ENCODE measurements at regions of chr9 and their contacts with region 1.

Region 1: DNA sequence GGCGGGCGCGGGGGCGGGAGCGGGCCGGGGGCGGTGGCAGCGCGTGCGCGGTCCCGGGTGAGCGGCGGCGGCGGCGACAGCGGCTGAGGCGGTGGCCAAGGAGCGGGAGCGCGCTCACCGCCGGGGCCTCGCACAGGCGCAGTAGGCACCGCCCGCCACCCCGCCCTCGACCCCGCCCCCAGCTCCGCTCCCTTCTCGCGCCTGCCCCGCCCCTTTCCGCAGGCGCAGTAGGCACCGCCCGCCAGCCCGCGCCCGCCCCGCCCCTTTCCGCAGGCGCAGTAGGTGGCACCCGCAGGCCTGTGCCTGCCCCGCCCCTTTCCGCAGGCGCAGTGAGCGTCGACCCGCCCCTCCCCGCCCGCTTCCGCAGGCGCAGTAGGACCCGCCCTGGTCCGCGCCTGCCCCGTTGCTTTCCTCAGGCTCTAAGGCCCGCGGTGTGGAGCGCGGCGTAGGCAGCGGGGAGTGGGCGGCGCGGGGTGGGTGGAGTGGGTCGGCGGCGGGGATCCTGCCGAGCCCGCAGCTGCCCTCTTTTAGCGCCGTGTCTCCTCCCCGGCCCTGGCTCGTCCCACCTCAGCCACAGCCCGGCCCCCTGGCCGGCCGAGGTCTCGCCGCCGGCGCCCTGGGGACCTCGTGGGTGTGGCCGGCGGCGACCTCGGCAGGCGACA is at the start of gene CAMSAP1:
- DNase-seq: peak; percentile 98
- ATAC-seq: peak; percentile 81
- H3K4me3 Mint-ChIP-seq: peak within 1 kb of the TSS; percentile 81
- H3K27ac Mint-ChIP-seq: peak within 1 kb of the TSS; percentile 90
- H3K4me1 Mint-ChIP-seq: peaks cover 62% of the 10 kb centered on the region
- H3K27me3 Mint-ChIP-seq: no peaks in the 10 kb centered on the region
- total RNA-seq, gene CAMSAP1: 31.2 to 33.4 TPM

Region 2: DNA sequence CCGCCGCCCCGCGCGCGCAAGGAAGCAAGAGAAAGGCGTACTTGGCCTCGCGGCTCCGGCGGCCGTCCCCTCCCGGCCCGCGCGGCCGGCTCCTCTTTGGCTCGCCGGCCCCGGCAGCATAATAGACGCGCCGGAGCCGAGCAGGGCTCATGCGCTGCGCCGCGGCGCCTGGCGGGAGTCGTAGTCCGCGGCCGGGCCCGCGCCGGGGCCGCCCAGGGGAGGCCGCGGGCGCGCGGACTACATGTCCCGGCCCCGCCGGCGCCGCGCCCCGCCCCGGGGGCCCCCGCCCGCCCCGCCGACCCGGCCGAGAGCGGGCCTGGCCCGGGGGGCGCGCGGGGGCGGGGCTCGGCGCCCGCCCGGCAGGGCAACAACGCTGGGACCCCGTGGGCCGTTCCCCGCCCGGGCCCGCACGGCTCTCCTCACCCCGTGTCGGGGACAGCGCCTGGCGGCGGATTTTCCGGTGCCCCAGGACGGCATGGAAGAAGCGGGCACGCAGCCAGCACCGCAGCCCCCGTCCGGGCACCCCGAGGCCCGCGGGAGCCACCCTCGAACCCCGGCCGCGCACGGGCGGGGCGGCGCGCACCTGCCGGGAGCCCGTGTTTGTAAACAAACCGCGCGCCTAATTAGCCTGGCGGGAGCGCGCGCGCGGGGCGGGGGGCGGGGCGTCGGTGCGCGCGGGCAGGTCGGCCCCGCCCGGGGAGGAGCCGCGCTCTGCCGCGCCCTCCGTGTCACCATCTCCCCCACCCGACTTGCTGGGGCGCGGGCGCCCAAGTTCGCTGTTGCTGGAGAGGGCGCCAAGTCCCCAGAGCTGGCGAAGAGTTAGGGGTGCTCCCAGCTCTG is 1839.4 kb before region 1 on chr9 and contains the start of gene BRD3:
- CTCF ChIA-PET with region 1: no interaction called
- POLR2A ChIA-PET with region 1: no interaction called
- intact Hi-C with region 1: loop called in 1 of 2 experiments (anchors 5 kb)
- DNase-seq: peak; percentile 91
- ATAC-seq: peak; percentile 85
- H3K4me3 Mint-ChIP-seq: peak within 1 kb of the TSS; percentile 85
- H3K27ac Mint-ChIP-seq: peak within 1 kb of the TSS; percentile 84
- H3K4me1 Mint-ChIP-seq: peaks cover 28% of the 10 kb centered on the region
- H3K27me3 Mint-ChIP-seq: peaks cover 14% of the 10 kb centered on the region
- total RNA-seq, gene BRD3: 33.8 to 39.2 TPM

Region 3: DNA sequence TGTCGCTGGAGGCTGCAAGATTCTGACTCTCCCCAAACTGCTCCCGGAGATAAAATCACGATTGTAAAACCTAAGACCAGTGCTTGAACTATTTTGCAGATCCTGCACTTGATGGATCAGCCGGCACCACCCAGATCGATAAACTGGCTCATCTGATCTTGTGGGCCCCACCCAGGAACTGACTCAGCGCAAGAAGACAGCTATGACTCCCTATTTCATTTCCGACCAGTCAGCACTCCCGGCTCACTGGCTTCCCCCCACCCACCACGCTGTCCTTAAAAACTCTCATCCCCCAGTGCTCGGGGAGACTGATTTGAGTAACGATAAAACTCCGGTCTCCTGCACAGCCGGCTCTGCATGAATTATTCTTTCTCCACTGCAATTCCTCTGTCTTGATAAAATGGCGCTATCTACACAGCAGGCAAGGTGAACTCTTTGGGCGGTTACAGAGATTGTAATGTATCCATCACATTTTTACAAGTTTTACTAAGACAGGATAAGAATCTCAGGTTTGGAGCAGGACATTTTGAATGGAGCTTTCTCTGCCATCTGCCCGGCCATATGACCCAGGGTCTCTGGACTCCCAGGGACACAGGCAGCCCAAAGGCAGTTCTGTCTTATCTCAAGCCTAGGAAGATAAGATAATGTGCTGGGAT is 438.6 kb before region 1 on chr9:
- CTCF ChIA-PET with region 1: no interaction called
- POLR2A ChIA-PET with region 1: no interaction called
- intact Hi-C with region 1: no loop called
- DNase-seq: peak; percentile 79
- ATAC-seq: peak; percentile 98
- H3K4me3 Mint-ChIP-seq: peak overlapping the region; percentile 42
- H3K27ac Mint-ChIP-seq: no peak overlapping the region
- H3K4me1 Mint-ChIP-seq: peaks cover 19% of the 10 kb centered on the region
- H3K27me3 Mint-ChIP-seq: peaks cover 39% of the 10 kb centered on the region

Region 4: DNA sequence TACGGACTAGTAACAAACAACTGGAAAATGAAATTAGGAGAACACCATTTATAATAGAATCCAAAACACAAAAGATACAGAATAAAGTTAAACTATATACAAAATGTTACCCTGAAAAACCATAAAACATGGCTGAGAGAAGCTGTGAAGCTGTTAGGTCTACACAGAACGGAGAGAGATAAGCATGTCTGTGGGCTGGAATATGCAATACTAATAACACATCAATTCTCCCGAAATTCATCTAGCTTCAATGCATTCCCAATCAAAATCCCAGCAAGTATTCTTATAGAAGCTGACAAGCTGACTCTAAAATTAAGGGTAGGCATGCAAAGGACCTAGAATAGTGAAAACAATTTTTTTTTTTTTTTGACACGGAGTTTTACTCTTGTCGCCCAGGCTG is 32.7 kb before region 1 on chr9:
- CTCF ChIA-PET with region 1: no interaction called
- POLR2A ChIA-PET with region 1: no interaction called
- intact Hi-C with region 1: no loop called
- DNase-seq: no peak
- ATAC-seq: no peak
- H3K4me3 Mint-ChIP-seq: no peak overlapping the region
- H3K27ac Mint-ChIP-seq: no peak overlapping the region
- H3K4me1 Mint-ChIP-seq: peaks cover 36% of the 10 kb centered on the region
- H3K27me3 Mint-ChIP-seq: no peaks in the 10 kb centered on the region

Region 5: DNA sequence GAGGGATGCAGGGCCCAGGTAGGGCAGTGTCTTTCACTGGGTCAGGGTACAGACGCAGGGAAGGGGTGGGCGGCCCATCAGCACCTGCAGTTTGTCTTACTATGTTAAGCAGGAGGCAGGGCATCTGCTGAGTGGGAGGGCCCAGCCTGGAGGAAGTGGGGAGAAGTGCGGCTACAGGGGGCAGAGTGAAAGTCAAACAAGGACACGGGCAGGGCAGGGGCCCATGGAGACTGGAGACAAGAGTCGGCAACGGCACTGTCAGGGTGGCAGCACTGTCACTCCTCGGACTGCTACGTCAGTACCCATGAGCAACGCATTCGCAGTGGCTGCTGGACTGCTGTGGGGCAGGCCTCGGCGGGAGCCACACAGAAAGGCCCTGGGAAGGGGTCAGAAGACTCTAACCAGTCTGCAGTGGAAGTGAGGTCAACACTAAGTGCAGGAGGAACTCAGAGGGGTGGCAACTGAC is 19.9 kb before region 1 on chr9:
- CTCF ChIA-PET with region 1: interaction called, 3 read pairs
- POLR2A ChIA-PET with region 1: no interaction called
- intact Hi-C with region 1: loop called (anchors 1 to 2 kb)
- DNase-seq: peak; percentile 83
- ATAC-seq: peak; percentile 90
- H3K4me3 Mint-ChIP-seq: peak overlapping the region; percentile 56
- H3K27ac Mint-ChIP-seq: peak overlapping the region; percentile 90
- H3K4me1 Mint-ChIP-seq: peaks cover 69% of the 10 kb centered on the region
- H3K27me3 Mint-ChIP-seq: no peaks in the 10 kb centered on the region

Region 6: DNA sequence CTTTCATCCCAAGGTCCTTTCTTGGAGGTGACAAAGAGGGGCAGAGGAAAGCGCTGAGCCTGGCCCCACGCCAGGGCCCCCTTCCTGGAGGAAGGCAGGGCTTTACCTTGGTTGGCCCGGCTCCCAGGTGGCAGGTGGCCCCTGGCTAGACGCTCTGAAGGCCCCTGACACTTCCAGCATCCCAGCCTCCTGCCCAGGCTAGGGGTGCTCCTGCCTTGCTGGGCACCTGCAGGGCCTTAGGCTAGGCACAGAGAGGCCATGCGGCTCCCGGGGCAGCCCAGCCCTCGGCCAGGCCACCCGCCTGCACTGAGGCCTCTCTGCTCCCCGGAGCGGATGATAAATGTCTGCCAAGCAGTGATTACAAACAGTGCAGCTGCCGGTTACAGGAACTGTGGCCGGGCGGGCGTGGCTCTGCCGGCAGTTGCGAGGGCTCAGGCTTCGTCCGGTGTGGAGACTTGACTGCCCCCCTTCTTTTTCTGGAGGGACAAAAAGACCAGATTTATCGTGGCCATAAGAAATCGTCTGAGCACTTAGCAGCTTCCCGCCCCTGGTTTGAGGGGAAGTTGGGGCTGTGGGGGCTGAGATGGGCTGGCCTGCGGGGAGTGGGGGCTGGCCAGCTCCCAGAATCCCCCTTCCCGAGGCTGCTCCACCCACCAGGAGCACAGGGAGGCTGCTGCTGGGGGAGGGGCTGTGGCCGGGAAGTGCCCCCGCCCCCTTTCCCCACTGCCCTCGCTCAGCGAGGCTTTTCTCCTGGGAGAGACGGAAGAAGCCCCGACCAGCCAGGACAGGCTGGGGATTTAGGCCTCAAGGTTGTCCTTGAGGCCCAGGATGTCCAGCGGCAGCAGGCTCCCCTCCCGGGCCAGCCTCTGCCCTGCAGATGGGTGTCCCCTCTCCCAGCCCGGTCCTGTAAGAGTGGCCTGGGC is 85.2 kb after region 1 on chr9:
- CTCF ChIA-PET with region 1: no interaction called
- POLR2A ChIA-PET with region 1: no interaction called
- intact Hi-C with region 1: loop called in 1 of 2 experiments (anchors 1 kb)
- DNase-seq: peak; percentile 68
- ATAC-seq: peak; percentile 71
- H3K4me3 Mint-ChIP-seq: no peak overlapping the region
- H3K27ac Mint-ChIP-seq: no peak overlapping the region
- H3K4me1 Mint-ChIP-seq: peaks cover 17% of the 10 kb centered on the region
- H3K27me3 Mint-ChIP-seq: no peaks in the 10 kb centered on the region

Region 7: DNA sequence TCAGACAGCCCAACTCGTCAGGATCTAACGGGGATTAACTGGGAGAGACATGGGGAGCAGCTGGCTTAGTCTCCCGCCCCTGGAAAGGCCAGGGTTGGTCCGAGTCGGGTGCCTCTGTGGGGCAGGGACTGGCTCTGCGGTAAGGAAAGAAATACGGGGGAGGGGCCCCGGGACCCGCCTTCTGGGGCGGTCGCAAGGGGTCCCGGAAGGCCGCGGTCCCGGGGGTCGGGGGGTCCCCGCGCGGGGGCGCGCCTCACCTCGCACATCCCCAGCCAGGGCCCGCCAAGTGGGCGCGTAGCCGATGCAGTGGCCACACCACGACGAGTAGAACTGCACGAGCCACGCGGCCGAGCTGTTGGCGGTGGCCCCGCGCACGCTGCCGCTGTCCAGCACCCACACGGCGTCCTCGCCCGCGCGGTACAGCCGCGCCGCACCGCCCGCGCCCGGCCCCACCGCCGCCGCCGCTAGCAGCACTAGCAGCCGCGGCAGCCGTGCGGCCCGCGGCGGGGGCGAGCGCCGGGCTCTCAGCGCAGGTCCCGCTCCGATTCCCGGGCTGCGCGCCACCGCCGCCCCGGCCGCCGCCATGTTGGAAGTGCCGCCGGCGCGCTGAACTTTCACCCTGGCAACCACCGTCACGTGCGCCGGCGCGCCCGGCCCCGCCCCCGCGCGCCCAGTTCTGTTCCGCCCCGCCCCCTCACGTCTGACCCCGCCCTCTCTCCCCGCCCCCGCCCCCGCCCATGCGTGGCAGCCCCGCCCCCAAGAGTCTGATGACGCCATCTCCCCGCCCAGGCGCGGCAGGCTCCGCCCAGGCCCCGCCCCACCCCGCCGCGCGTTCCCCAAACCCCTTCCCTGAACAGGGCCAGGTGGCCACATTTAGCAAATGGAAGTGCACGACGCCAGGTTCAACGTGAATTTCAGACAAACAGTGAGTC is 337.9 kb after region 1 on chr9 and contains the start of gene QSOX2:
- CTCF ChIA-PET with region 1: no interaction called
- POLR2A ChIA-PET with region 1: no interaction called
- intact Hi-C with region 1: loop called in 1 of 2 experiments (anchors 1 kb)
- DNase-seq: peak; percentile 94
- ATAC-seq: peak; percentile 61
- H3K4me3 Mint-ChIP-seq: peak within 1 kb of the TSS; percentile 85
- H3K27ac Mint-ChIP-seq: peak within 1 kb of the TSS; percentile 95
- H3K4me1 Mint-ChIP-seq: peaks cover 28% of the 10 kb centered on the region
- H3K27me3 Mint-ChIP-seq: no peaks in the 10 kb centered on the region
- total RNA-seq, gene QSOX2: 18.1 to 21.2 TPM

Region 8: GRCh38 chr9:136545966-136546698 is 638.6 kb after region 1 on chr9 and contains the start of gene NOTCH1:
- CTCF ChIA-PET with region 1: no interaction called
- POLR2A ChIA-PET with region 1: no interaction called
- intact Hi-C with region 1: loop called in 1 of 2 experiments (anchors 2 kb)
- DNase-seq: peak; percentile 95
- ATAC-seq: peak; percentile 75
- H3K4me3 Mint-ChIP-seq: peak within 1 kb of the TSS; percentile 92
- H3K27ac Mint-ChIP-seq: peak within 1 kb of the TSS; percentile 88
- H3K4me1 Mint-ChIP-seq: peaks cover 34% of the 10 kb centered on the region
- H3K27me3 Mint-ChIP-seq: no peaks in the 10 kb centered on the region
- total RNA-seq, gene NOTCH1: 70.0 to 79.4 TPM